AG04449 (cell line): ENCODE measurements at regions of chr10 and their contacts with region 1.

Region 1: DNA sequence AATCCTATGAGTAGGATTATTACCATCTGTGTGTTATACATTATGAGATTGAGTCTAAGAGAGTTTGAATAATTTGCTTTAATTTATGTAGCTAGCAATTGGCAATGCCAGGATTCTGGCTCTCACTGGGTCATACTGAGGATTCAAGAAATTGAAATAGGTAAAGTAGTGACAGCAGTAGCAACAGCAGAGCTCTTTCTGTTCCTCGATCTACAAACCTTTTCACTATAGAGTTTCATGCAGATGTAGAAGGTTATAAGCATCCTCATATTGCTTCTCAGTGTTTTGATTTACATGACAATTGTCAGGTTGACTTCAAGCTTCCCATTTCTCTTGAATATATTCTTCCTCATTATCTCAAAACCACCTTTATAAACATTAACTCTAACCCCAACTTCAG is 294.1 kb upstream of the CSTF2T start:
- DNase-seq: no peak
- H3K4me3 ChIP-seq: no peak overlapping the region
- CTCF ChIP-seq: no peak

Region 2: GRCh38 chr10:52004342-52004949 is 11.0 kb after region 1 on chr10:
- CTCF ChIA-PET with region 1: interaction called, 26 read pairs
- POLR2A ChIA-PET with region 1: no interaction called
- DNase-seq: no peak
- H3K4me3 ChIP-seq: no peak overlapping the region
- CTCF ChIP-seq: peak; percentile 47